Right cardiac atrium (tissue), 5 donors: ENCODE measurements at regions of chr7 and their contacts with region 1.

Region 1: GRCh38 chr7:142308326-142308725 is 50.5 kb upstream of the PRSS58 start:
- DNase-seq: no peak
- ATAC-seq: peak in 1 of 2 donors; percentile 29
- H3K4me3 ChIP-seq: no peak overlapping the region
- H3K27ac ChIP-seq: no peak overlapping the region
- H3K4me1 ChIP-seq: no peaks in the 10 kb centered on the region
- H3K27me3 ChIP-seq: no peaks in the 10 kb centered on the region

Region 2: DNA sequence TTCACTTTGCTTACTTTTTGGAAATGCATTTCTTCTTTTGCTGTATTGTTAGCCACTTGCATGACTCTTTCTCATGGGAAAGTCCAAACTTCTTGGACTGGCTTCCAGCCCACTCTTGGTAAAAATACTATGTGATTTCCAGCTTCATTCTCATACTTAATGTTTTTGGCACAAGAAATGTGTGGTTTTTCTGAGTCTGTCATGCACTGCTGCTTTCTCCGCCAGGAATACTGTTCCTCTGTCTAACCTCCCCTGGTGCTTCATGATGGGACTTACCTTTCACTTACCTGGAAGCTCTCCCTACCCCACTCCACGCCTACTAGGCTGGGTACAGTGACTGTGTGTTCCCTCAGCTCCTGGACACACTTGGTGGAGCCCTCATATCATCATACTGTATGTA is 178.1 kb before region 1 on chr7:
- intact Hi-C with region 1: no loop called
- DNase-seq: no peak
- ATAC-seq: no peak
- H3K4me3 ChIP-seq: no peak overlapping the region
- H3K27ac ChIP-seq: no peak overlapping the region
- H3K4me1 ChIP-seq: peaks cover 2% of the 10 kb centered on the region
- H3K27me3 ChIP-seq: no peaks in the 10 kb centered on the region

Region 3: DNA sequence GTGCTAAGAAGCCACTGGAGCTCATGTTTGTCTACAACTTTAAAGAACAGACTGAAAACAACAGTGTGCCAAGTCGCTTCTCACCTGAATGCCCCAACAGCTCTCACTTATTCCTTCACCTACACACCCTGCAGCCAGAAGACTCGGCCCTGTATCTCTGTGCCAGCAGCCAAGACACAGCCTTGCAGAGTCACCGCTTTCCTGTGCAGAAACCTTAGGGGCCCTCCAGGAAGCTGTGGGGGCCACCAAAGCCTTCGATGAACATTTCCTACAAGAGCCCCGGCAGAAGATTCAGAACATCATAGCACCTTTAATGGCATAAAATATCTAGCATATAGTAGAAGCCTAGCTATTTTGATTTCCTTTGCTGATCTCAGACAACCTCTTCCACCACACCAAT is 37.5 kb after region 1 on chr7:
- intact Hi-C with region 1: loop called in 2 of 4 experiments (anchors 2 kb)
- DNase-seq: no peak
- ATAC-seq: no peak
- H3K4me3 ChIP-seq: no peak overlapping the region
- H3K27ac ChIP-seq: no peak overlapping the region
- H3K4me1 ChIP-seq: no peaks in the 10 kb centered on the region
- H3K27me3 ChIP-seq: no peaks in the 10 kb centered on the region